H1 (cell line): ENCODE measurements at regions of chr17 and their contacts with region 1.

Region 1: DNA sequence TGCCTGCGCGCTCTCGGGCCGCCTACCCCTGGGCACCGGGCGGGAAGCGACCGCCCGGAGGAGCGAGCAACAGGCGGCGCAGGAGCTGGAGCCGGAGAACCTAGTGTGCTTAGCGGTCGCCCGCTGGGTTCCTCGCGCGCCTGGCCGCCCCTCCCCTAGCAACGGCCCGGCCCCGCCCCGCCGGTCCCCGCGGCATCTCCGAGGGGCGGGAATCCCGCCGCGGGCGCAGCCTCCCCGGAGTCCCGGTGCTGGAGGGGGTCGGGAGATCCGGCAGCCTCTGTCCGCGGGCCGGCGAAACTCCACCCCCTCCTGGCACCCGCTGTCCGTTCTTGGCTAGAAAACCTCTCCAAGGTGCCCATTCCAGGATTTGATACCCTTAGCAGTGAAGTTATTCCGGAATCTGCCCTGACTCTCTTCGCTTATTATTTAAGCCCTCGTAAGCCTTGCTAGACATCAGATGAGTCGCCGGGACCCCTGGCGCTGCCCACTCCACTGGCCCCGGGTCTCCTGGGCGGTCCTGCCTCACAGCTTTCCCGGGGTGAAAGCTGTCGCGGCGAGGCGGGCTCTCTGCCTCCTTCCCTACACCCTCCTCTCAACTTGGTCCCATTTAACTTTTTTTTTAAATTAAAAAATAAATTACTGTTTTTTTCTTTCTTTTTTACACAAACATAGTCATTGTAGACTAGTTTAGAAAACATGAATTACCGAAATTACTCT is at the start of gene RPRML:
- DNase-seq: peak in 1 of 2 experiments; percentile 77
- H3K4me3 ChIP-seq: peak within 1 kb of the TSS; percentile 53 to 70 (median 65)
- H3K27ac ChIP-seq: no peak within 1 kb of the TSS
- H3K4me1 ChIP-seq: peaks cover 8 to 18% (median 13%) of the 10 kb centered on the region in 4 experiments
- H3K27me3 ChIP-seq: peaks cover 8 to 21% (median 21%) of the 10 kb centered on the region in 4 experiments
- CTCF ChIP-seq: no peak
- EP300 ChIP-seq: no peak
- POLR2A ChIP-seq: no peak
- RAD21 ChIP-seq: no peak
- total RNA-seq, gene RPRML: 5.5 and 7.2 TPM in 2 replicates

Region 2: DNA sequence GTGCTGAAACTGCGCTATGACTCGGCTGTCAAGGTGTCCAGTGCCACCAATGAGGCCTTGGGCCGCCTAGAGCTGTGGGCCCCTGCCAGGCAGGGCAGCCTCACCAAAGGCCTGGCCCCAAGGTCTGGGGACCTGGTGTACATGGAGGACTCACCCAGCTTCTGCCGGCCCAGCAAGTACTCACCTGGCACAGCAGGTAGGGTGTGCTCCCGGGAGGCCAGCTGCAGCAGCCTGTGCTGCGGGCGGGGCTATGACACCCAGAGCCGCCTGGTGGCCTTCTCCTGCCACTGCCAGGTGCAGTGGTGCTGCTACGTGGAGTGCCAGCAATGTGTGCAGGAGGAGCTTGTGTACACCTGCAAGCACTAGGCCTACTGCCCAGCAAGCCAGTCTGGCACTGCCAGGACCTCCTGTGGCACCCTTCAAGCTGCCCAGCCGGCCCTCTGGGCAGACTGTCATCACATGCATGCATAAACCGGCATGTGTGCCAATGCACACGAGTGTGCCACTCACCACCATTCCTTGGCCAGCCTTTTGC is 102.9 kb before region 1 on chr17:
- CTCF ChIA-PET with region 1: no interaction called
- POLR2A ChIA-PET with region 1: no interaction called
- DNase-seq: peak in 1 of 2 experiments; percentile 74
- H3K4me3 ChIP-seq: no peak overlapping the region
- H3K27ac ChIP-seq: no peak overlapping the region
- H3K4me1 ChIP-seq: no peaks in the 10 kb centered on the region
- H3K27me3 ChIP-seq: no peaks in the 10 kb centered on the region; a peak in 2 of 7 replicates
- CTCF ChIP-seq: peak; percentile 73 to 79 (median 74)
- EP300 ChIP-seq: no peak
- POLR2A ChIP-seq: no peak
- RAD21 ChIP-seq: peak; percentile 54 to 68; a peak in 3 of 4 replicates

Region 3: DNA sequence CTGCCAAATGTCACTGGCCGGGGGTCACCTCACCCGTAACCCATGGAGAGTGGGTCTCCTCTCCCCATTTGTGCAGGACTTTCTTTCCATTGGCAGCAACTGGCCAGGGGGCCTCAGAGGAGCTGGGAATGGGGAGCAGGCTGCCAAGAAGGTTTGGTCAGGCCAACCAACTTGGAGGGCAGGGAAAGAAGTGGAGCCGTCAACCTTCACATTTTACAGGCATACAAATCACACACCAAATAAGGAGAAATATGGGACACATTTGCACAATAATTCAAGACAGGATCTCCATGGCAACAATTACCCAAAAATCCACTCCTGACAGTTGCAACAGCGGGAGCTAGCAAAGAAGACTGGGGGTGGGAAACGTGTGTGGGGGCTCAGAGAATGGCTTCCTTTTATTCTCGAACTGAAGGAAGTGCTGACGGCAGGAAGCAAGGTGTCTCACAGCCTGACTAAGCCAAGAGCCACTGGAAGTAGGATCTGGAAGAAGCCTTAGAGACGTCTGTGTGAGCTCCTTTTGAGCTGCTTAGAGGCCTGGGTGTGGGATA is 21.2 kb before region 1 on chr17:
- CTCF ChIA-PET with region 1: interaction called, 20 read pairs
- POLR2A ChIA-PET with region 1: interaction called, 3 read pairs
- DNase-seq: no peak
- H3K4me3 ChIP-seq: no peak overlapping the region
- H3K27ac ChIP-seq: no peak overlapping the region
- H3K4me1 ChIP-seq: no peaks in the 10 kb centered on the region
- H3K27me3 ChIP-seq: peaks cover 0 to 2% (median 0%) of the 10 kb centered on the region in 4 experiments; a peak in 1 of 7 replicates
- CTCF ChIP-seq: no peak
- EP300 ChIP-seq: no peak
- POLR2A ChIP-seq: no peak
- RAD21 ChIP-seq: no peak

Region 4: DNA sequence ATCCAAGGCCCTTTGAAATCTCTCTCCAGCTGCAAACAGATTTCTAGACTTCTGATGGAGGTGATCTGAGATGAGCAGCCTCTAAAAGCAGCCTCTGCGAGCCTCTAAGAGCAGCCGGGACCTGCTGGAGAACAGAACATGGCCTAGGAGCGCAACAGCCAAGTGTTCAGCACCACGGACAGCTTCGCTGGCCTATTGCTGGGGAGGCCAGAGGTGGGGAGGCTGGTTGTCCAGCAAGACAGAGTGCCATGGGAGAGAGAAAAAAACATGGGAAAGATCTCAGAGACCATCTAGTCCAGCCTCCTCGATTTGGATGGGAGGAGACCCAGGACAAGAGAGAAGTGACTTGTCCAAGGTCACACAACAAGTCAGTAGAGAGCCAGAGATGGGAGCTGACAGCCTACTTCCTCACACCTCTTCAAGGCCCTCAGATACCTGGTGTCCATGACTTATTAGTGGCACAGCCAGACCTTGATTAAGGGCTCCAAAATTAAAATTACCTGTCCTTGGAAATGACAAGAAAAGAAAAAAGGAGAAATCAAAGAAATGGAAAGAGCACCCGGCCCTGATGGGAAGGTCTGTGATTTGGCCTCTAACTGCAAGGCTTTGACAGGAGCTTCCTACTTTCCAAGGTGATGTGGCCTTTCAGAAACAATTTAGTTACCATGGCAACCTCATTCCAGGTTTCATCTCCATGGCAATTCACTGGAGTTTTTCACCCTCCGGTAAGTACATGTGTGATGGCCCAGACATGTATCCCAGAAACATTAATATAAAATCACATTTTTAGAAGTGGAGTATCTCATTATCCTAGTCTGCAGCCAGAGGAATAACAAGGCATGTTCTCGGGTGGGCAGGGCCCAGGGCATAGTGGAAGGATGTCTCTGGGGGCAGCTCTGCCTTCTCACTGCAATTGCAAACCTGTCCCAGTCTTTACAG is 14.7 kb before region 1 on chr17:
- CTCF ChIA-PET with region 1: interaction called, 20 read pairs
- POLR2A ChIA-PET with region 1: no interaction called
- DNase-seq: peak in 1 of 2 experiments; percentile 66
- H3K4me3 ChIP-seq: no peak overlapping the region
- H3K27ac ChIP-seq: no peak overlapping the region
- H3K4me1 ChIP-seq: no peaks in the 10 kb centered on the region
- H3K27me3 ChIP-seq: no peaks in the 10 kb centered on the region; a peak in 1 of 7 replicates
- CTCF ChIP-seq: no peak; a peak in 1 of 4 replicates
- EP300 ChIP-seq: no peak
- POLR2A ChIP-seq: no peak
- RAD21 ChIP-seq: no peak

Region 5: DNA sequence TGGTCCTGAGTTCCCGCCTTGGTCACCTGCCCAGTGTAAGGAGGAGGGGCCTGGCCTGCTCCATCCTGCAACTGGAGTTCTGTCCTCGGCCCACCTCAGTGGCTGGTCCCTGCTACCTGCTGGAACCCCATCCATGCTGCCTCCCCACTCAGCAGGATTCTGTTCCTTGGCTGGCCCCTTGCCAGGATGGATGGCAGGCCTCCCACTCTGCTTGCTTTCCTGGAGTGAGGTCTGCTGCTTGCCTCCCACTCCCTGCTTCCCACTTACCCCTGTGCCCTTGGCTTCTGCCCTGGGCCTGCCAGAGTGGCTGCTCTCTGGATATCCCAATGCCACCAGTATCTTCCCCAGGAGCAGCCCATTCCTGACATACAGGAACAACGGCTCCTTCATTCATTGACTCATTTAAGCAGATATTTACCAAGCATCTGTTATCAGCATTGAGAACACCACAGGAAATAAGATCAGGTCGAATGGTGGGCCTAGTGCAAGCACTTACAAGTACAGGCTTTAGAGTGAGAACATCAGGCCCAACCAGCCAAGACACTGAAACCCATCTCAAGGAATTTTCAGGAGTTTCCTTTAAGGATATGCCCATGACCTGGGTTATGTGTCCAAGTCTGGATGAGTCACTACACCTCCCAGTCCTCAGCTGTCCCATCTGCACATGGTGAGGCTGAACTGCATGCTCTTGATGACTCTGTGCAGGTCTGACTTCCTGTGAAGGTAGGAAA is 16.7 kb after region 1 on chr17:
- CTCF ChIA-PET with region 1: interaction called, 9 read pairs
- POLR2A ChIA-PET with region 1: interaction called, 11 read pairs
- DNase-seq: no peak
- H3K4me3 ChIP-seq: no peak overlapping the region
- H3K27ac ChIP-seq: no peak overlapping the region
- H3K4me1 ChIP-seq: no peaks in the 10 kb centered on the region
- H3K27me3 ChIP-seq: no peaks in the 10 kb centered on the region
- CTCF ChIP-seq: no peak
- EP300 ChIP-seq: no peak
- POLR2A ChIP-seq: no peak
- RAD21 ChIP-seq: no peak